ENCODE measurements at regions of chr7 and their contacts with region 1.

Region 1: DNA sequence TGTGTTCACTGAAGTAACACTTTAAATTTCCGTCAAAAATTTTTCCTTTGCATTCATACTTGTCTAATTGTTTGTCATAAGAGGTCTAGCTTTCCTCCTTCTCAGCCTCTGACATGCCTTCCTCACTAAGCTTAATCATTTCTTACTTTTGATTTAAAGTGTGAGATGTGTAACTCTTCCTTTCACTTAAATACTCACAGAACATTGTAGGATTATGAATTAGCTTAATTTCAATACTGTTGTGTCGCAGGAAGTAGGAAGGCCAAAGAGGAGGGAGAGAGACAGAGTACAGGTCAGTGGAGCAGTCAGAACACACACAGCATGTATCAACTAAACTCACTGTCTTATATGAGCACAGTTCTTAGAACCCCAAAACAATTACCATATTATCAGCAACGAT is 99.0 kb downstream of the SRPK2 start:
- DNase-seq: peak; percentile 25
- H3K4me3 Mint-ChIP-seq: no peak overlapping the region
- H3K27ac Mint-ChIP-seq: peak overlapping the region; percentile 55
- H3K4me1 Mint-ChIP-seq: peaks cover 33% of the 10 kb centered on the region
- H3K27me3 Mint-ChIP-seq: no peaks in the 10 kb centered on the region

Region 2: GRCh38 chr7:105098863-105099515 is 190.7 kb before region 1 on chr7:
- CTCF ChIA-PET with region 1: no interaction called
- POLR2A ChIA-PET with region 1: no interaction called
- intact Hi-C with region 1: loop called (anchors 2 kb)
- DNase-seq: no peak
- H3K4me3 Mint-ChIP-seq: no peak overlapping the region
- H3K27ac Mint-ChIP-seq: peak overlapping the region; percentile 24
- H3K4me1 Mint-ChIP-seq: peaks cover 63% of the 10 kb centered on the region
- H3K27me3 Mint-ChIP-seq: no peaks in the 10 kb centered on the region

Region 3: GRCh38 chr7:105209870-105210269 is 79.8 kb before region 1 on chr7:
- CTCF ChIA-PET with region 1: no interaction called
- POLR2A ChIA-PET with region 1: no interaction called
- intact Hi-C with region 1: loop called (anchors 1 kb)
- DNase-seq: no peak
- H3K4me3 Mint-ChIP-seq: no peak overlapping the region
- H3K27ac Mint-ChIP-seq: no peak overlapping the region
- H3K4me1 Mint-ChIP-seq: peaks cover 73% of the 10 kb centered on the region
- H3K27me3 Mint-ChIP-seq: no peaks in the 10 kb centered on the region

Region 4: GRCh38 chr7:105224884-105225651 is 64.6 kb before region 1 on chr7:
- CTCF ChIA-PET with region 1: no interaction called
- POLR2A ChIA-PET with region 1: no interaction called
- intact Hi-C with region 1: no loop called
- DNase-seq: no peak
- H3K4me3 Mint-ChIP-seq: no peak overlapping the region
- H3K27ac Mint-ChIP-seq: no peak overlapping the region
- H3K4me1 Mint-ChIP-seq: peaks cover 19% of the 10 kb centered on the region
- H3K27me3 Mint-ChIP-seq: no peaks in the 10 kb centered on the region

Region 5: GRCh38 chr7:105268511-105269392 is 21.0 kb before region 1 on chr7:
- CTCF ChIA-PET with region 1: interaction called, 3 read pairs
- POLR2A ChIA-PET with region 1: interaction called, 11 read pairs
- intact Hi-C with region 1: loop called (anchors 1 kb)
- DNase-seq: no peak
- H3K4me3 Mint-ChIP-seq: peak overlapping the region; percentile 74
- H3K27ac Mint-ChIP-seq: peak overlapping the region; percentile 79
- H3K4me1 Mint-ChIP-seq: peaks cover 52% of the 10 kb centered on the region
- H3K27me3 Mint-ChIP-seq: no peaks in the 10 kb centered on the region

Region 6: GRCh38 chr7:105309235-105310169 is 19.8 kb after region 1 on chr7:
- CTCF ChIA-PET with region 1: no interaction called
- POLR2A ChIA-PET with region 1: interaction called, 4 read pairs
- intact Hi-C with region 1: loop called (anchors 1 kb)
- DNase-seq: peak; percentile 31
- H3K4me3 Mint-ChIP-seq: no peak overlapping the region
- H3K27ac Mint-ChIP-seq: peak overlapping the region; percentile 4
- H3K4me1 Mint-ChIP-seq: peaks cover 64% of the 10 kb centered on the region
- H3K27me3 Mint-ChIP-seq: no peaks in the 10 kb centered on the region

Region 7: DNA sequence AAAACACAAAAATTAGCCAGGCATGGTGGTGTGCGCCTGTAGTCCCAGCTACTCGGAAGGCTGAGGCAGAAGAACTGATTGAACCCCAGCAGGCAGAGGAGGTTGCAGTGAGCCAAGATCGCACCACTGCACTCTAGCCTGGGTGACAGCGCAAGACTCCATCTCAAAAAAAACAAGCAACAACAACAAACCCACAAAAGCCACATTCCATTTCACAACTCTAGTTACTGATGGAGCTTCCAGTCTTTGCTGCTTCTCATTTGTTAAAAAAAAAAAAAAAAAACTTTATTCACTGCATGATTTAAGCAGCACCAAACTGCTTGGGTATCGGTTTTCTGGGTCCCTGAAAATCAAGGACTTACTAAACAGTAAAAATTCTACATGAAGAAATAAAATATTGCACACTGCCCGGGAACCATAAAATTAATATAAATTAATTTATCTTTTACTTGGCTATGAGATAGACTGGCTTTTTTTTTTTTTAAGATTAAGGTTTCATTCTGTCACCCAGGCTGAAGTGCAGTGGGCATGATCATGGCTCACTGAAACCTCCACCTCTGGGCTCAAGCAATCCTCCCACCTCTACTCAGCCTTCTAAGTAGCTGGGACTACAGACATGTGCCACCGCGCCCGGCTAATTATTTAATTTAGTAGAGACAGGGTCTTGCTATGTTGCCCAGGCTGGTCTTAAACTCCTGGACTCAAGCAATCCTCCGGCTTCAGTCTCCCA is 57.1 kb after region 1 on chr7:
- CTCF ChIA-PET with region 1: no interaction called
- POLR2A ChIA-PET with region 1: no interaction called
- intact Hi-C with region 1: loop called (anchors 1 kb)
- DNase-seq: peak; percentile 28
- H3K4me3 Mint-ChIP-seq: no peak overlapping the region
- H3K27ac Mint-ChIP-seq: no peak overlapping the region
- H3K4me1 Mint-ChIP-seq: peaks cover 51% of the 10 kb centered on the region
- H3K27me3 Mint-ChIP-seq: no peaks in the 10 kb centered on the region

Region 8: GRCh38 chr7:105352018-105352612 is 62.4 kb after region 1 on chr7:
- CTCF ChIA-PET with region 1: no interaction called
- POLR2A ChIA-PET with region 1: no interaction called
- intact Hi-C with region 1: loop called (anchors 1 kb)
- DNase-seq: peak; percentile 68
- H3K4me3 Mint-ChIP-seq: peak overlapping the region; percentile 42
- H3K27ac Mint-ChIP-seq: peak overlapping the region; percentile 94
- H3K4me1 Mint-ChIP-seq: peaks cover 58% of the 10 kb centered on the region
- H3K27me3 Mint-ChIP-seq: no peaks in the 10 kb centered on the region